ENCODE measurements at regions of chr5 and their contacts with region 1.

Region 1: DNA sequence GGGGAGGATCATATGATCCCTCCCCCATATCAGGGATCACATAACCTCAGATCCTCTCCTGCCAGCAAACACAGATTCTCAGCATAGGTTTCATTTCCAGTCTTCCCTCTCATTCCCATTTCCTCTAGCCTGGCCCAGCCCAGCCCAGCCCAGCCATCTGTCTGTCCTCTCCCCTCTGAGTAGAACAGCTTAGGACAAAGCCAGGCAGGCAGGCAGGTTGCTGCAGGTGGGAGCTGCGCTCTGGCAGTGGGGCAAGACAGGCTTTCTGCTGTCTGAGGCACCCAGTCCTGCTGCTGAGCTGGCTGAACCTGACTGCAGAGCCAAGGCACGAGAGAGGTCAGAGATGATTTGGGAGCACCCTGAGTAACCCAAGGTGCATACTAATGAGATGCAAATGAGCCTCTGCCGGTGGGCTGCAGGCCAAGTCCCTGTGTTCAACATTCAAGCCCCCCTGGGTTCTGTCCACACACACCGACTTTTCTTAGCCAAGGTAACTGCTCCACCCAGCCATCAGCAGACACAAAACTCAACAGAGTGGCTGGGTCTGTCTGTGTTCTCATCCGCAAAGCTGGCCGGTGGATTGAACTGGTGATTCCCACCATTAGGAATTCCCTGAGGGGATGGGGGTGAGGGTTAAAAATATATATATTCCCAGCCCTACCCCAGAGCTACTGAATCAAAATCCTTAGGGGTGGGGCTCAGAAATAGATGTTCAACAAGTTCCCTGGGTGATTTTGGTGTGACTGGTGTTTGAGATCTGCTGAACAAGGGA is 9.1 kb downstream of the FAT2 start:
- DNase-seq: no peak
- CTCF ChIP-seq: no peak

Region 2: DNA sequence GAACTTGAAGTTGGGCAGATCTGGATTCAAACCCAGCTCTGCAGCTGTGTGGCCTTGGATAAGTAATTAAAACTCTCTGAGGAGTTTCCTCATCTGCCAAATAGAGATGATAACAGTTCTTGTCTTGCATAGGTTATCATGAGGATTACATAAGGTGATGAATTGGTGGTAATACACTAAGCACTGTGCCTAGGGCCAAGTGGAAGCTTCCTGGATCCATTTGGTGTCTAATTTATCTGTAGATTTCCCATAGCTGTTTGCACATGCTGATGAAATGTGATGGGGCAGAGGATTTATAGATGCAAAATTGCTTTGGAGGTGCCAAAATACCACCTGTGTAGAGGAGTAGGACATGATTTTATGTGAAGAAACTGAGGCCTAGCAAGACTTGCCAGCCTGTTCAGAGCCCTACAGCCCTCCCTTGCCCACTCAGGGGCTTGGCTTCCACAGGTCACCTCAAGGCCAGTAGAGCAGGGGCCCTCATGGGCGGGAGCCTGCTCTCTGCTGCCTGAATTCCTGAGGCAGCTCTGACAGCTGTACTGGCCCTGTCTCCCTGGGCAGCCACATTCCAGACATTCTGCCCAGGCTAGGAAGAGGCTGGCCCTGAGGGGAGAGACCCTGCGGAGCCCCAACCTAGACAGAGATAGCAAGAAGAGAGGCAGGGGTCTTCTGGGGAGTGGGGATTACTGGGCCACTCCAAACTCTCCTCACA is 15.0 kb after region 1 on chr5:
- CTCF ChIA-PET with region 1: interaction called, 10 read pairs
- POLR2A ChIA-PET with region 1: no interaction called
- DNase-seq: no peak
- CTCF ChIP-seq: no peak